ENCODE measurements at regions of chr5 and their contacts with region 1.

Region 1: GRCh38 chr5:91383027-91383955 is at the start of gene ARRDC3:
- DNase-seq: peak; percentile 84

Region 2: GRCh38 chr5:90932052-90932699 is 451.1 kb before region 1 on chr5:
- CTCF ChIA-PET with region 1: interaction called, 28 read pairs
- POLR2A ChIA-PET with region 1: interaction called, 10 read pairs
- DNase-seq: peak; percentile 52

Region 3: GRCh38 chr5:91225848-91226686 is 157.2 kb before region 1 on chr5:
- CTCF ChIA-PET with region 1: interaction called, 32 read pairs
- POLR2A ChIA-PET with region 1: interaction called, 8 read pairs
- DNase-seq: no peak

Region 4: DNA sequence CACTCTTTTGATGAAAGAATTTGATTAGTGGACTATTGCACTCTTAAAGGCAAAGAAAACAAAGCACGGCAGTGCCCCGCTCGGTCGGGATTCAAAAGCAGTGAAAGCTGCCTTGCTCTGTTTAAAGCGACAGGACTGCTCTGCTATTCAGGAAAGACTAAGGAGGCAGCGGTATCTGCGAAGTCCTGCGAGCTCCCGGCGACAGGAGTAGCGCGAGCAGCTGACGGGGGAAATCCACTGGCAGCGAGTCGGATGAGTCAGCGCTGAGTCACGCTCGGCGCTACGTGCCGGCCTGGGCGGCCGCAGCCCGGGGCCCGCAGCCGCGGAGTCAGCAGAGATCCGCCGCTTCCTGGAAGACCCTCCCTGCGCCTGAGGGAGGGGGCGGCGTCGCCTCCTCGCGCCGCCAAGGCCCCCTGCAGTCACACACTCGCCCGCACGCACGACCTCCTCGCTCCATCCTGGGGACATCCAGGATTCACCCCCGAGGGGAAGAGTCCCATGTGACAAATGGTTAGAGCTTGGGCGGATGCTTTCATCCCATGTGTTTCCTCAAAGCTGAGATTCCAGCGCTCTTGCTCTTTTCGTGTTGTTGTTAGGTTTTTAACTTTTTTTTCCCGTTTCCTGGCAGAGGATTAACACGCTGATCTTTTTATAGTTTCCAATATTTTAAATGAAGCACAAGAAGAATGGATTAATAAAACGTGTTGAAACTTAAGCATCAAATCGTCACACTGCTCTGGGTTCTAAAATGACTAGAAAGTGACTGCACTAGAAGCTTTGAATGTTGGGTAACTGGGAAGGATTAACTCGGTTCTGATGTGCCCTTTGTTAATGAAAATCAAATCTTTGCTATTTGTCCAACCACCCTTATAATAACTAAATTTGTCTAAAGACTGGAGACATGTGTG is 102.7 kb before region 1 on chr5:
- CTCF ChIA-PET with region 1: no interaction called
- POLR2A ChIA-PET with region 1: interaction called, 38 read pairs
- DNase-seq: peak; percentile 89

Region 5: GRCh38 chr5:91369480-91369879 is 13.8 kb before region 1 on chr5:
- CTCF ChIA-PET with region 1: interaction called, 4 read pairs
- POLR2A ChIA-PET with region 1: interaction called, 11 read pairs
- DNase-seq: no peak